PC-3 (cell line): ENCODE measurements at regions of chr9 and their contacts with region 1.

Region 1: DNA sequence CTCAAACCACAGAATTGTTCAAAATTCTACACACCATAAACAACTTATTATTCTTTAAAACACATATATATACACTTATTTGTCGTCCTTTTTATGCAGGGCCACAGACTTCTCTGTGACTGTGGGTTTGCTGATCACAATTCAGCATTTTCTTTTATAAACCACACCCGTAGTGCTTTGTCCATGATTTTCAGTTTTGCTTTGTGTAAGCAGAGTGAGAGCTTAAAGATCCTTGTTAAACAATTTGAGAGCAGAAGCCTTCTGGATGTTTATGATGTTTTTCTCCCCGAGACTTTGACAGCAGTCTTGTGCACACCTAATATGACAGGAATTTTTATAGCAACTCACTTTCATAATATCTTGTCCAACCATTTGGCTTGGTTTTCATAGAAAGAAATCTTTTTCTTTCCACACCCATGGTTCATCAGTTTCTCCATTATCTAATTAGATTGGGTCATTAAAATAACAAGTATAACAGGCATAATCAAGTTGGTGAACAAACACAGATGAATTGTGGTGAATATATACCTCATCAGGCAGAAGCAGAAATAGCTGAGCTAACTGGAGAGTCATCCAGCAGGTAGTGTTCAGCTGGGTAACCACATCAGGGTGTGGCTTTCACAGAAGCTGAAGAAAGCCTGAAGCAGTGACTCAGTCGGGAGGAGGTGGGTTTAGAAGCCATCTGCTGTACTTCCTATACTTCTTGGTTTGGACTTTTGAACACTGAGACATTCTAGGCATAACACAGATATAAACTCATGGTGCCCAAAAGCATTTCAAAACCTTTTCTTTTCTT is 232.8 kb downstream of the DOCK8 start:
- DNase-seq: peak; percentile 90
- ATAC-seq: peak; percentile 100
- H3K4me3 ChIP-seq: peak overlapping the region; percentile 44
- H3K27ac ChIP-seq: peak overlapping the region; percentile 62
- H3K4me1 ChIP-seq: peaks cover 16% of the 10 kb centered on the region
- H3K27me3 ChIP-seq: no peaks in the 10 kb centered on the region
- CTCF ChIP-seq: no peak

Region 2: DNA sequence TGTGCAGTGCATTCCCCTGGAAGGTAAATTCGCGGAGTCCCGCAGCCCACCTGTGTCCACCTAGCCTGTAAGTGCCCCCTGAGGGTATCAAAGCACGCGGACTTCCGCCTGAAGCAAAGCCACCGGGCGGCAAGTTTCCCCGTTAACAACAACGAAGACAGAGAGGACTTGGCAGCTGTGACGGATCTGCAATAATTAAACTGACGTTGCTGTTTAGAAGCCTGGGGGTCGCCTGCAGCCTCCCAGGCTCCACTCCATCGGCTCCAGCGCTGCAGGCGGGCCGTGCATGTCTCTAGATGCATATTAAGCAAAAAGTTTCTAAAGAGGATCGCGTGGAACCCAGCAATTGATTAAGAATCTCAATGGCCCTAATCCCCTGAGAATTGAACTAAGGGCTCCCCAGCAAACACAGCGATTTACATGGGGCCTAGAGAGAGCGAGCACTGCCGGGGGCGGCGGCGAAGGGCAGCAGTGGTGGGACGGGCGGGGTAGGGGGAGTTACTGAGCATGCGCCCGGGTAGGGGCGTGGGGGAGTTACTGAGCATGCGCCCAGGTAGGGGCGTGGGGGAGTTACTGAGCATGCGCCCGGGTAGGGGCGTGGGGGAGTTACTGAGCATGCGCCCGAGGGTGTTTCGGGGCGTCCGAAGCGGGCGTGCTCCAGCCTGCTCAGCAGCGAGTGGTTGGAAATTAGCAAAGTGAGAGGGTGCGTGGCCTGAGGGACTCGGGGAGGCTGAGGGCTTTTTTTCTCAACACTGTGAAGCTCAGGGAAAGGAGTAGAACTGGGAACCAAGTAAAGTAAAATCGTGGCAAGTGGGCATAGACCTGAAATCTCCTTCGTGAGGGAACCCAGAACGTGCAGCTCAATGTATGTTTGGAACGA is 22.5 kb after region 1 on chr9:
- CTCF ChIA-PET with region 1: no interaction called
- POLR2A ChIA-PET with region 1: no interaction called
- intact Hi-C with region 1: no loop called
- DNase-seq: peak; percentile 76
- ATAC-seq: peak; percentile 81
- H3K4me3 ChIP-seq: peak overlapping the region; percentile 63
- H3K27ac ChIP-seq: peak overlapping the region; percentile 27
- H3K4me1 ChIP-seq: peaks cover 43% of the 10 kb centered on the region
- H3K27me3 ChIP-seq: no peaks in the 10 kb centered on the region
- CTCF ChIP-seq: no peak

Region 3: DNA sequence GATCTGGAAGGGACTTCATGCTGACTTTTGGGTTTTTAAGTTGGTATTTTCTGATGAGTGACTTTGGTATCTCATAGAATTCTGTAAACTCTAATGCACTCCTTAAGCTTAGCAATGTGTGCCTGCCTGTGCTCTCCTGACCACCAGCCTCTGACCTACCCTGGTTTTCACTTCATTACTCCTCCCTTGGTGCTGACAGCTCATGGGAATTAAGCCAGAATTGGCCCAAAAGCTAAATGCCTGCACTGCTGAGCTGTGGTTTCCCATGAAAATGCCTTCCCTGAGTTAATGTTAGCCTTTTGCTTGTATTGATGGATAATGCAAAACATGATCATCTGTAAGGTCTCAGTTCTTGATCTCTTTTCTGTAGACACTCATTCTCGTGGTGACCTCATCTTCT is 75.2 kb after region 1 on chr9:
- CTCF ChIA-PET with region 1: interaction called, 10 read pairs
- POLR2A ChIA-PET with region 1: no interaction called
- intact Hi-C with region 1: no loop called
- DNase-seq: no peak
- ATAC-seq: no peak
- H3K4me3 ChIP-seq: no peak overlapping the region
- H3K27ac ChIP-seq: no peak overlapping the region
- H3K4me1 ChIP-seq: peaks cover 10% of the 10 kb centered on the region
- H3K27me3 ChIP-seq: no peaks in the 10 kb centered on the region
- CTCF ChIP-seq: no peak